Dendritic cell treated with granulocyte-macrophage colony-stimulating factor and Interleukin-4, amounts not matched to agents 40 ng/mL and 50 ng/mL, for 4 days (primary cell): ENCODE measurements at regions of chr12 and their contacts with region 1.

Region 1: DNA sequence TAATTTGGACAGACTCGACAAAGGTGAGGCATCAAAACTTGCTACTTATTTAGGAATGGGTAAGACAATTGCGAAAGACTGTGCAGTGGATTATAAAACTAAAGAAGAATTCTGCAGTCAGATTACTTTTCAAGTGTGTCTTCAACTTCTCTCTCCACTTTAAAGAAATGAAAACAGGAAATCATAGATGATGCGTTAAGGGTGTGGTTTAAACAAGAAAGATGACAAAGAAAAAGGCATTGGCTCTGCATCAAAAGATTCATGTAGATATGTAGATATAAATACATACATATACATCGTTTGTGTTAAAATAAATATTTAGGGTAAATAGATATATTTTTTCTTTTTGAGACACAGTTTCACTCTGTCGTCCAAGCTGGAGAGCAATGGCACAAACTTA is 74.6 kb upstream of the PARP11 start:
- H3K4me3 Mint-ChIP-seq: no peak overlapping the region
- H3K27ac Mint-ChIP-seq: peak overlapping the region; percentile 91
- H3K4me1 Mint-ChIP-seq: peaks cover 37% of the 10 kb centered on the region
- H3K27me3 Mint-ChIP-seq: peaks cover 5% of the 10 kb centered on the region

Region 2: DNA sequence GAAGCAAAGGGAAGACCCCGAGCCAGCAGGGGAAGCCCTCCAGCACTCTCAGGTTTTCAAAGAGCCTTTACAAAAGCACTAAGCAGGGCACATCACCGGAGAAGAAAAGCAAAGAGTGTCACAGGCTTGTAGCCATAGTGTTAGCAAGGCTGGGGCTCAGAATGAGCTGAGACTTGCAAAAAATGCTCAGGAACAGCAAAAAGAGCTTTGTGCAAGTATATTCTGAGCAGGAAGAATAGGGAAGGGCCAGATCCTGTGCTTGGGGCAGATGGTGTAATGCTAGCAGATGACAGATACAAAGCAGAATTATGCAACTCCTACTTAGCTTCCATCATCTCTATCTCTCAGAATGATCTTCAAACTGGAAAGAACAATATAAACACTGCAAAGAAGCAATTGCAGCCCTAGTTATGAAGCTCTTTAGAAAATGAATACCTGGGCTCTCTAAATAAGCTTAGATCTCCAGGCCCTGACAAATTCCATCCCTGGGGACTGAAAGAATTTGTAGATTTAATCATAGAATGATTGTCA is 50.9 kb before region 1 on chr12:
- intact Hi-C with region 1: loop called (anchors 2 kb)
- H3K4me3 Mint-ChIP-seq: peak overlapping the region; percentile 28
- H3K27ac Mint-ChIP-seq: peak overlapping the region; percentile 94
- H3K4me1 Mint-ChIP-seq: peaks cover 11% of the 10 kb centered on the region
- H3K27me3 Mint-ChIP-seq: no peaks in the 10 kb centered on the region